Activated B cell treated with CpG ODN at 0.5 μM for 24 hours (primary cell): ENCODE measurements at regions of chr10 and their contacts with region 1.

Region 1: GRCh38 chr10:71812016-71812912 is 38.8 kb downstream of the PSAP start:
- DNase-seq: peak; percentile 79
- ATAC-seq: peak; percentile 94
- H3K4me3 Mint-ChIP-seq: no peak overlapping the region
- H3K27ac Mint-ChIP-seq: no peak overlapping the region
- H3K4me1 Mint-ChIP-seq: peaks cover 2% of the 10 kb centered on the region
- H3K27me3 Mint-ChIP-seq: no peaks in the 10 kb centered on the region
- CTCF ChIP-seq: no peak

Region 2: GRCh38 chr10:71319042-71319799 is 493.0 kb before region 1 on chr10 and contains the start of gene SLC29A3:
- CTCF ChIA-PET with region 1: interaction called, 14 read pairs
- POLR2A ChIA-PET with region 1: no interaction called
- intact Hi-C with region 1: loop called (anchors 1 kb)
- DNase-seq: peak; percentile 72
- ATAC-seq: peak; percentile 90
- H3K4me3 Mint-ChIP-seq: peak within 1 kb of the TSS; percentile 96
- H3K27ac Mint-ChIP-seq: peak within 1 kb of the TSS; percentile 80
- H3K4me1 Mint-ChIP-seq: peaks cover 13% of the 10 kb centered on the region
- H3K27me3 Mint-ChIP-seq: no peaks in the 10 kb centered on the region
- CTCF ChIP-seq: no peak
- total RNA-seq, gene SLC29A3: 3.1 and 4.3 TPM in 2 replicates

Region 3: DNA sequence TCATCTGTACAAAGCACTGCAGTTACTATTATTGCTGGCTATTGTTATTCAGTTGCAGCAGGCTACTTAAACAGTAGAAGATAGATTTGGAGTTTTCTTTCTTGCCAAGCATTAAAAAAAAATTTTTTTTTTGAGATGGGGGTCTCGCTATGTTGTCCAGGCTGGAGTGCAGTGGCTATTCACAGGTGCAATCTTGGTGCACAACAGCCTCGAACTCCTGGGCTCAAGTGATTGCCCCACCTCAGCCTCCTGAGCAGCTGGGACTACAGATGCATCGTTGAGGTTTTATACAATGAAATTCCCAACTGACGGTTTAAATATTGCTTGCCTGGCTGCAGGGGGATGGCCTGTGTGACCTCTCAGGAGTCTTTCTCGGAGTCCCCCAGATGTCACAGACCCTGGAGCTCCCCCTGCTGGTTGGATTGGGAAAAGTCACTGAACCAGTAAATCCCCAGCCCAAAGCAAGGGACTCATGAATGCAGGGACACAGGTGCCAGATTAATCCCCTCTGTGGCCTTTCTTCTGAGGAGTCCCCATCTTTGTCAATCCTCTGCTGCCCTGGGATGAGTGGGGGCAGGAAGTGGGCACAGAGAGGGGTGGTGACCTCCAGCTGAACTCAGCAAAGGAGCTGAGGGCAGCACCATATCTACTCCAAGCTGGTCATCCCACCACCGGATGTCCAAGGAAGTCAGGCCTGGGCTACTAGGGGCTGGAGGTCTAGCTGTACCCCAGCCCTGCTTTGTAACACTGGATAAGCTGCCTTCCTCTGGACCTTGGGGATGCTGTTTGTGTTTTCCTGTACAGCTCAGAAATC is 242.3 kb before region 1 on chr10:
- CTCF ChIA-PET with region 1: interaction called, 10 read pairs
- POLR2A ChIA-PET with region 1: interaction called, 3 read pairs
- intact Hi-C with region 1: loop called (anchors 2 kb)
- DNase-seq: peak; percentile 62
- ATAC-seq: peak; percentile 67
- H3K4me3 Mint-ChIP-seq: no peak overlapping the region
- H3K27ac Mint-ChIP-seq: no peak overlapping the region
- H3K4me1 Mint-ChIP-seq: no peaks in the 10 kb centered on the region
- H3K27me3 Mint-ChIP-seq: peaks cover 5% of the 10 kb centered on the region
- CTCF ChIP-seq: no peak

Region 4: GRCh38 chr10:71696628-71697326 is 115.5 kb before region 1 on chr10:
- CTCF ChIA-PET with region 1: interaction called, 17 read pairs
- POLR2A ChIA-PET with region 1: interaction called, 13 read pairs
- intact Hi-C with region 1: loop called (anchors 1 kb)
- DNase-seq: peak; percentile 59
- ATAC-seq: no peak
- H3K4me3 Mint-ChIP-seq: no peak overlapping the region
- H3K27ac Mint-ChIP-seq: no peak overlapping the region
- H3K4me1 Mint-ChIP-seq: peaks cover 63% of the 10 kb centered on the region
- H3K27me3 Mint-ChIP-seq: no peaks in the 10 kb centered on the region
- CTCF ChIP-seq: peak; percentile 27

Region 5: GRCh38 chr10:71727738-71728737 is 84.2 kb before region 1 on chr10:
- CTCF ChIA-PET with region 1: interaction called, 11 read pairs
- POLR2A ChIA-PET with region 1: no interaction called
- intact Hi-C with region 1: loop called (anchors 1 kb)
- DNase-seq: no peak
- ATAC-seq: peak; percentile 64
- H3K4me3 Mint-ChIP-seq: peak overlapping the region; percentile 64
- H3K27ac Mint-ChIP-seq: peak overlapping the region; percentile 91
- H3K4me1 Mint-ChIP-seq: peaks cover 54% of the 10 kb centered on the region
- H3K27me3 Mint-ChIP-seq: no peaks in the 10 kb centered on the region
- CTCF ChIP-seq: no peak

Region 6: GRCh38 chr10:71835671-71836595 is 23.7 kb after region 1 on chr10:
- CTCF ChIA-PET with region 1: interaction called, 3 read pairs
- POLR2A ChIA-PET with region 1: interaction called, 4 read pairs
- intact Hi-C with region 1: loop called (anchors 1 kb)
- DNase-seq: peak; percentile 84
- ATAC-seq: peak; percentile 92
- H3K4me3 Mint-ChIP-seq: peak overlapping the region; percentile 79
- H3K27ac Mint-ChIP-seq: peak overlapping the region; percentile 95
- H3K4me1 Mint-ChIP-seq: peaks cover 88% of the 10 kb centered on the region
- H3K27me3 Mint-ChIP-seq: no peaks in the 10 kb centered on the region
- CTCF ChIP-seq: no peak

Region 7: GRCh38 chr10:71860243-71861029 is 48.2 kb after region 1 on chr10:
- CTCF ChIA-PET with region 1: no interaction called
- POLR2A ChIA-PET with region 1: no interaction called
- intact Hi-C with region 1: no loop called
- DNase-seq: no peak
- ATAC-seq: peak; percentile 83
- H3K4me3 Mint-ChIP-seq: peak overlapping the region; percentile 19
- H3K27ac Mint-ChIP-seq: peak overlapping the region; percentile 50
- H3K4me1 Mint-ChIP-seq: peaks cover 24% of the 10 kb centered on the region
- H3K27me3 Mint-ChIP-seq: no peaks in the 10 kb centered on the region
- CTCF ChIP-seq: no peak

Region 8: GRCh38 chr10:72386916-72387586 is 574.8 kb after region 1 on chr10:
- CTCF ChIA-PET with region 1: no interaction called
- POLR2A ChIA-PET with region 1: no interaction called
- intact Hi-C with region 1: no loop called
- DNase-seq: no peak
- ATAC-seq: no peak
- H3K4me3 Mint-ChIP-seq: no peak overlapping the region
- H3K27ac Mint-ChIP-seq: no peak overlapping the region
- H3K4me1 Mint-ChIP-seq: peaks cover 3% of the 10 kb centered on the region
- H3K27me3 Mint-ChIP-seq: no peaks in the 10 kb centered on the region
- CTCF ChIP-seq: no peak